Activated naive CD4-positive, alpha-beta T cell treated with anti-CD3 and anti-CD28 coated beads for 36 hours (primary cell): ENCODE measurements at regions of chr17 and their contacts with region 1.

Region 1: DNA sequence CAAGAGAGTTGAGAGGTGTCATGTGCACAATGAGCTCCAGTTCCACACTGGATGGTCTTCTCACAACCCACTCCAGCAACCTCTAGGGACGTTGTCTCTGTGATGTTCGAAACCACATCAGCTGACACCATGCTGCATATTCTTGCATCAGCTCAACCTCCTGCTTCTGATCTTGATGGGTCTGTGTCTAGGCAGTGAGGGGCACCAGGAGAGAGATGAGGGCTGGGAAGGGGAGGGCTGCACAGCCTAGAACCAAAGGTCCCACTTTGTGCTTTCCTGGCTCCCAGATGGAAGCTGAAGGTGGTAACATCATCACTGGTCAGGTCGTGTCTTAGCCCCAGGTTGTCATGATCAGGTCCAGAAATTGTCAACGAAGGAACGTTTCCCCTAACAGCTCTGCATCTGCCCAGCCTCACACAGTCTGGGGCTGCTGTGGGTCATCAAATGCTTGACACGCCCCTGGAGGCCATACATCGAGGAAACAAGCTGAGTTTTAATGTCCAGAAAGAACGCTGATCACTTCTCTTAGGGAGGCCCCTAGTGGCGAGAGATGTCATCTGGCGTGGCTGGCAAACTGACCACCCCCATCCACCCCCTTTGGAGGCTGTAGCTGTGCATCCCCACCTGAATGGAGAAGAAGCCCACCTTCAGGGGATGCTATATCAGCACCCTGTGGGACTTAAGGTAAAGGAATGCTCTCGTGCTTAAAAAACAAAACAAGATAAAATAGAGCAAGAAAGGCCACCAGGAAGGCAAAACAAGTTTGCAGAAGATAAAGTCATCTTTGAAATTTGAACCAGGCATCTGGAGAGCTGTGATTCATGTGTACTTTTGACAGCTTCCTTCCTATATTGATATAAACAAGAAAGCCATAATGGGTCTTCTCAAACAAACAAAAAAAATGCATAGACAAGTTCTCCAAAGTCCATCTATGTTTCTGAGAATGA is 58.3 kb downstream of the WIPI1 start:
- DNase-seq: peak; percentile 56
- H3K4me3 Mint-ChIP-seq: no peak overlapping the region
- H3K27ac Mint-ChIP-seq: peak overlapping the region; percentile 43
- H3K4me1 Mint-ChIP-seq: peaks cover 27% of the 10 kb centered on the region
- H3K27me3 Mint-ChIP-seq: no peaks in the 10 kb centered on the region

Region 2: GRCh38 chr17:68356520-68356919 is 42.4 kb before region 1 on chr17:
- CTCF ChIA-PET with region 1: interaction called, 8 read pairs
- intact Hi-C with region 1: loop called (anchors 1 kb)
- DNase-seq: peak; percentile 85
- H3K4me3 Mint-ChIP-seq: no peak overlapping the region
- H3K27ac Mint-ChIP-seq: peak overlapping the region; percentile 46
- H3K4me1 Mint-ChIP-seq: peaks cover 49% of the 10 kb centered on the region
- H3K27me3 Mint-ChIP-seq: no peaks in the 10 kb centered on the region